ENCODE measurements at regions of chr17 and their contacts with region 1.

Region 1: DNA sequence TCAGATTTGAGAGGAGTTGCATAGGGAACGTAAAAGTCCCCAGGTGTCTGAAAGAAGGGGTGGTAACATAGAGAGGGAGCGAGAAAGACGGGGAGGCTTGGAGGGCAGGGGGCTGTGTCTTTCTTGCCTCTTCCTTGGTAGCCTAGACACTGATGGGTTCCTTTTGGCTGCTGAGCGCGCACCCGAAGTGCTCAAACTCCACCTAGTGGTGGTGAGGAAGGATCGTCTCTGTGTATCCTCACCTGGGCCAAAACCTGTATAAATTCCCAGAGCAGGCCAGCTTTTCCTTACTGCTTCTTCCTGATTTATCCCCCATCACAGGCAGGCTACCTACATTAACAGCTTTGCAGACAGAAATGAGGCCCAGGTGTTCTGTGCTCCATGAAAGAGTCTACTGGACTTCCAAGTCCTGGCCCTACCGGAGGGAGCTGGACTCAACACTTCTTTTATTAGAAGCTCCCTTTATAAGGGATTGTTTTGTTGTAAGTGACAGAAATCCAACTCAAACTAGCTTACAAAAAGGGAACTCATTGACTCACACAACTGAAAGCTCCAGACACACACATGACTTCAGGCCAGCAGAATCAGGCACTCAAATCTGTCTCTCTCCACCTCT is 5.5 kb upstream of the SLC25A35 start:
- DNase-seq: peak; percentile 62 to 76 (median 72)
- H3K4me3 ChIP-seq: no peak overlapping the region
- H3K4me3 Mint-ChIP-seq: peak overlapping the region in 2 of 8 donors; percentile 2
- H3K27ac ChIP-seq: no peak overlapping the region
- H3K27ac Mint-ChIP-seq: peak overlapping the region in 6 of 7 donors; percentile 47 to 90 (median 83)
- H3K4me1 ChIP-seq: peaks cover 7% of the 10 kb centered on the region
- H3K4me1 Mint-ChIP-seq: peaks cover 7 to 16% (median 11%) of the 10 kb centered on the region in 4 donors
- H3K27me3 ChIP-seq: no peaks in the 10 kb centered on the region
- H3K27me3 Mint-ChIP-seq: peaks cover 0 to 1% of the 10 kb centered on the region in 2 donors

Region 2: DNA sequence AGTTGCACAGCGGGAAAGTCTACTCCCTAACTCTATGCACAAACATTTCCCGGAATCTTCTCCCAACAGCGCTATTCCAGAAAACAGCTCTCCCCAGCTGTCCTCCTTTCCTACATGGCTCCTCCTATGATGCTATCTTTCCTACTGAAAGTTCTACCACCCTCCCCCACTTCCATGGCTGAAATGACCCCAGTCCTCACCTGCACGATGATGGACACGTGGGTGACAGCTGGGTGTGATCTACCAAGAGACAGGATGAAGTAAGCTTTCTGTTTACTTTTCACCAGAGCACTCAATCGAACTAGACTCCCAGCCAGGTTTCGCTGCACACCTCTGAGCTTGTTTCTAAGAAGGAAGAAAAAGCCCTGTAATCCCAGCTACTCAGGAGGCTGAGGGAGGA is 63.6 kb before region 1 on chr17:
- CTCF ChIA-PET with region 1: interaction called, 116 read pairs
- POLR2A ChIA-PET with region 1: interaction called, 4 read pairs
- intact Hi-C with region 1: no loop called
- DNase-seq: no peak
- H3K4me3 ChIP-seq: no peak overlapping the region
- H3K4me3 Mint-ChIP-seq: no peak overlapping the region
- H3K27ac ChIP-seq: no peak overlapping the region
- H3K27ac Mint-ChIP-seq: peak overlapping the region in 2 of 7 donors; percentile 64 to 79
- H3K4me1 ChIP-seq: peaks cover 16% of the 10 kb centered on the region
- H3K4me1 Mint-ChIP-seq: peaks cover 21 to 37% (median 28%) of the 10 kb centered on the region in 4 donors
- H3K27me3 ChIP-seq: no peaks in the 10 kb centered on the region
- H3K27me3 Mint-ChIP-seq: no peaks in the 10 kb centered on the region

Region 3: GRCh38 chr17:8288336-8289102 is 12.2 kb before region 1 on chr17 and contains the start of gene RANGRF:
- CTCF ChIA-PET with region 1: interaction called, 14 read pairs
- POLR2A ChIA-PET with region 1: interaction called, 25 read pairs
- intact Hi-C with region 1: loop called (anchors 1 kb)
- DNase-seq: peak; percentile 70 to 83 (median 73)
- H3K4me3 ChIP-seq: peak within 1 kb of the TSS; percentile 88 to 98
- H3K4me3 Mint-ChIP-seq: peak within 1 kb of the TSS; percentile 93 to 98 (median 97)
- H3K27ac ChIP-seq: peak within 1 kb of the TSS; percentile 83
- H3K27ac Mint-ChIP-seq: peak within 1 kb of the TSS; percentile 94 to 98 (median 97)
- H3K4me1 ChIP-seq: peaks cover 49% of the 10 kb centered on the region
- H3K4me1 Mint-ChIP-seq: peaks cover 23 to 69% (median 44%) of the 10 kb centered on the region in 4 donors
- H3K27me3 ChIP-seq: no peaks in the 10 kb centered on the region
- H3K27me3 Mint-ChIP-seq: no peaks in the 10 kb centered on the region
- total RNA-seq, gene RANGRF: 39.7 to 42.8 TPM

Region 4: DNA sequence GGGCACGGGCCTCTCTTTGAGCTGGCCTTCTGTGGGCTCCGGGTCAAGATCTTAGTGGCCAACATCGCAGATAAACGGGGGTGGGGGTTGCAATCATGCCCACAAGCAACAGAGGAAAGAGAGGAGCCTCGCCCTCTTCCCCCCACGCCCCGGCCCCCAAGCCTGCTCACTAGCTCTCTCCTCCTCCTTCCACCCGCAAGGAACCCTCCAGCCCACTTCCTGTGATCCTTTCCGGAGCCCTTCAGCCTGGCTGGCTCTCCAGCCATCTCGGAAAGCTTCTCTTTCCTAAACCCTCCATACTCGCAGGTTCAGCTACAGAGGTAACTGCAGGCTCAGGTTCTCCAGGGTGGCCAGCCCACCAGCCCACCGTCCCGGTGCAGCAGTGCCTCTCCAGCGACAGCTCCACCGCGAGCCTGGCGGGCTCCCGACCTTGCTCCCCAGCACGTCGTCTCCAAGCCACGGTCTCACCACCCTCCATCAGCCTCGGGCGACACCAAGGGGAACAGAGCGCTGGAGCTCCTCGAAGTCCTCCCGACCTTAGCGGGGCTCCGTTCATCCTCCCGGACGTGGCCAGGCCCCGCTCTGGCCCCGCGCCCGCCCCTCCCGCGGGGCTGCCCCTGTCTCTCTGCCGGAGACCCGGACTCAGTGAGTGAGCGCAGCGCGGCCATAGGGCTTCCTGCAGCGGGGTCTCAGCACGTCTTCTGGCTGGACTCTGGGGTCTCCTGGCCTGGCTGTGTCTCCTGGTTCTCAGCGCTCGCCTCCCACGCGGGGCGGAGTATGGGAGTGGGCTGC is 26.0 kb after region 1 on chr17:
- CTCF ChIA-PET with region 1: no interaction called
- POLR2A ChIA-PET with region 1: no interaction called
- intact Hi-C with region 1: no loop called
- DNase-seq: peak in 4 of 5 donors; percentile 5 to 43 (median 14)
- H3K4me3 ChIP-seq: peak overlapping the region in 1 of 2 donors; percentile 21
- H3K4me3 Mint-ChIP-seq: peak overlapping the region; percentile 53 to 76 (median 69)
- H3K27ac ChIP-seq: no peak overlapping the region
- H3K27ac Mint-ChIP-seq: peak overlapping the region in 1 of 7 donors; percentile 13
- H3K4me1 ChIP-seq: peaks cover 15% of the 10 kb centered on the region
- H3K4me1 Mint-ChIP-seq: peaks cover 9 to 19% (median 15%) of the 10 kb centered on the region in 4 donors
- H3K27me3 ChIP-seq: peaks cover 16% of the 10 kb centered on the region
- H3K27me3 Mint-ChIP-seq: peaks cover 29 to 30% of the 10 kb centered on the region in 2 donors